ENCODE measurements at regions of chr7 and their contacts with region 1.

Region 1: DNA sequence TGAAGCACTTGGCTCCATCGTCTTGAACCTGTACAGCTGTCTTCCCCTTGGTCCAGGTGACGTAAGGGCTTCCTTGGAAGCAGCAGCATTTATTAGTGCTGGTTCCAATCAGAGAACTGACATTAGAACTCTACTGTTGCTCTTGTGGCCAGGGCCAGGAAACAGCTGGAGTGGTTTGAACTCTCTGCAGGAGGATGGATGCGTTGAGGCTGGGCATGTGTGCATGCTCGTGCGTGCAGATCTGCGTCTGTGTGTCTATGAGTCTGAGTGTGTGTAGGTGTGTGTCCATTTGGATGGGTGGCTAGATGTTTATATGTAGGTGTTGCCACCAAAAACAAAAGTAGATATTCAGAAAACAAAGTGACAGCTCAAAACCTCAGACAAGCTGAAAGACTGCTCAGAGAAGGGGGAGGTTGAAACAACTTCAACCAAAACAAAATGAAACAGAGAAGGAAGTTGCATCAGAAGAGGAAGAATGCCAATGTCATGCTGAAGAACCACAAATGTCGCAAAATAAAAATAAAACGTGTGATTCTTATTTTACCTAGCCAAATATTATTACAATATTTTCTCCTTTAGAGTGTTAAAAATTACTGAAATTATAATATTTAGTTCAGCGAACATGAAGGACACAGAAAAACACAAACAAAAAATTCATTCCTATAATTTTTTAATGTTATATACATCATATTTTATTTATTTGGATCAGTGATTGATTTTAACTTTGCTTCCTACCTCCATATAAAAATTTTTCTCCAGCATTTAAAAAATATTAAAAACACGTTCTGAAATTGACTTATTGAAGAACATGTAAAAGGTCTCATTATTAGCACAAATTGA is 96.1 kb upstream of the MKLN1 start:
- DNase-seq: peak; percentile 80 to 90 (median 82)
- H3K4me3 ChIP-seq: peak overlapping the region; percentile 25 to 31
- H3K4me3 Mint-ChIP-seq: peak overlapping the region; percentile 62 to 86 (median 80)
- H3K27ac ChIP-seq: peak overlapping the region; percentile 60
- H3K27ac Mint-ChIP-seq: peak overlapping the region; percentile 85 to 94 (median 92)
- H3K4me1 ChIP-seq: peaks cover 41% of the 10 kb centered on the region
- H3K4me1 Mint-ChIP-seq: peaks cover 20 to 46% (median 33%) of the 10 kb centered on the region in 4 donors
- H3K27me3 ChIP-seq: no peaks in the 10 kb centered on the region
- H3K27me3 Mint-ChIP-seq: no peaks in the 10 kb centered on the region

Region 2: DNA sequence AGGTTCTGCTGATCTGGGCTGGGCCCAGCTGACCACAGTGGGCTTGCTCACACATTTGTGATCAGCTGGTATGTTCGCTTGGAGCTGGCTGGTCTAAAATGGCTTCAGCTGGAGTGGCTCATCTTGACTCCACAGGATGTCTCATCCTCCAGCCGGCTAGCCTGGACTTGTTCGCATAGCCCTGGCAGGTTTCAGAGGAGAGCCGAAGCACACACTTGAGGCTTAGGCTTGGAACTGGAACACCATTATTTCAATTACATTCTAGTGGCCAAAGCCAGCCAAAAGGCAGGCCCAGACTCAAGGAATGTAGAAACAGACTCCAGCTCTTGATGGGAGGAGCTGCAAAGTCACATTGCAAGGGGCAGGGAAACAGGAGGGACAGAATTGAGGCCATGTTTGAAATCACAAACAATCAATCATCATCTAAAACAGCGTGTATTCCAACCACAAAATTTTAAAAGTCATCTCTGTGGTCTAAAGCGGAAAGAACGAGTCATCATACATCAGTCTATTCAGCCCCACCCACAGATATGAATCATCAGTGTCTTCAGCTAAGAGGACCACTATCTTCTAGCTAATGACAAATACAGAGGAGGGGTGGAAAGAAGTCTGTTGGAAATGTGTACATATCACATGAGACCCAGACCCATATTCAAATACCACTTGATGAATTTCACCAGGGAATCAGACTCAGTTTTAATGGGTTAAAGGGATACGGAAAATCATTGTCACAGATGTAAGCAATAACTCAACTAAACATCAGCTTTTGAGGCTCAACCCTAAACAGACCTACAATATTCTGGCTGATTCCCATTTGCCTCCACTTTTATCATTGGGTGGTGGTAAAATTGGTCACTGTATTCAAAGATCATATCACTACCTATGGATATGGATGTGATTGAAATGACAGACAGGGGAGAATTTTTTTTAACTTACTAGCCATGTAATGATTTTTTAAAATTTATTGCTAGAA is 42.9 kb before region 1 on chr7:
- CTCF ChIA-PET with region 1: interaction called, 4 read pairs
- POLR2A ChIA-PET with region 1: interaction called, 12 read pairs
- intact Hi-C with region 1: loop called (anchors 1 kb)
- DNase-seq: peak; percentile 83 to 88 (median 84)
- H3K4me3 ChIP-seq: no peak overlapping the region
- H3K4me3 Mint-ChIP-seq: peak overlapping the region; percentile 21 to 79 (median 69)
- H3K27ac ChIP-seq: peak overlapping the region; percentile 54
- H3K27ac Mint-ChIP-seq: peak overlapping the region; percentile 89 to 98 (median 95)
- H3K4me1 ChIP-seq: peaks cover 40% of the 10 kb centered on the region
- H3K4me1 Mint-ChIP-seq: peaks cover 26 to 43% (median 30%) of the 10 kb centered on the region in 4 donors
- H3K27me3 ChIP-seq: no peaks in the 10 kb centered on the region
- H3K27me3 Mint-ChIP-seq: peaks cover 0 to 2% of the 10 kb centered on the region in 2 donors

Measured in CD4-positive, alpha-beta memory T cell (primary cell).